ENCODE measurements at regions of chr11 and their contacts with region 1.

Region 1: DNA sequence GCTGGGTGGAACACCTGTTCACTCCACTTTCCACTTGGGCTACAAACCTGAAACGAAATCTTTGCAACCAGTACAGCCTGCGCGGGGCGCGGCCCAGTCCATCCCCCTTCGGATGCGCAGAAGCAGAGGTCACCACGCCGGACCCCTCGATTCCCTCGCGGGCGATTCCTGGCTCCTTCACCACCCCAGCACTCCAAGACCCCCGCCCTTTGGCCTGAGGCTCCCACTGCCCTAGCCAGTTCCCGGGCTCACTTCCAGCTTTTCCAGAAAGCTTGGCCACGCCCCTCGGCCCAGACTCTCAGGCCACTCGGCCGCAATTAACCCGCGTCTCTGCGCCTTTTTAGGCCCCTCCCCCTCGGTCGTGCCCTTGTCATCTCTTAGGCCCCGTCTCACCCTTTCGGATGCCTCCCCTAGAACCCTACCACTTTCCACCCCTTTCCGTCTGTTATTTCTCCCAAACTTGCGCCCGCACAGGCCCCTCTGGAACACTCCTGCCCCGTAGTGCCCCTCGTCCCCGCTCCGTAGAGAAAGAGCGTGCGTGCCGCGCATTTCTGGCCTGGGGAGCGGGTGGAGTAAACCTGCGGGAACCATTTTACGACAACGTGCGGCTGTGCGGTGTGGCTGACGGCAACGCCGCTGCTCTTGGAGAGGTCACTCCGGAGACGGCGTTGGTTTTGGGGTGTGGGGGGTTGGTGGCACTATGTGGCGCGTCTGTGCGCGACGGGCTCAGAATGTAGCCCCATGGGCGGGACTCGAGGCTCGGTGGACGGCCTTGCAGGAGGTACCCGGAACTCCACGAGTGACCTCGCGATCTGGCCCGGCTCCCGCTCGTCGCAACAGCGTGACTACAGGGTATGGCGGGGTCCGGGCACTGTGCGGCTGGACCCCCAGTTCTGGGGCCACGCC is at the start of gene DLAT:
- DNase-seq: peak; percentile 97 to 99
- H3K4me3 ChIP-seq: peak within 1 kb of the TSS; percentile 79
- H3K4me3 Mint-ChIP-seq: peak within 1 kb of the TSS; percentile 94
- H3K27ac Mint-ChIP-seq: peak within 1 kb of the TSS; percentile 98
- H3K4me1 ChIP-seq: no peaks in the 10 kb centered on the region; the same call in 1 of the 2 replicates
- H3K4me1 Mint-ChIP-seq: peaks cover 17% of the 10 kb centered on the region
- H3K27me3 ChIP-seq: no peaks in the 10 kb centered on the region
- H3K27me3 Mint-ChIP-seq: no peaks in the 10 kb centered on the region
- CTCF ChIP-seq: no peak
- total RNA-seq, gene DLAT: 99.3 and 100.0 TPM in 2 replicates

Region 2: DNA sequence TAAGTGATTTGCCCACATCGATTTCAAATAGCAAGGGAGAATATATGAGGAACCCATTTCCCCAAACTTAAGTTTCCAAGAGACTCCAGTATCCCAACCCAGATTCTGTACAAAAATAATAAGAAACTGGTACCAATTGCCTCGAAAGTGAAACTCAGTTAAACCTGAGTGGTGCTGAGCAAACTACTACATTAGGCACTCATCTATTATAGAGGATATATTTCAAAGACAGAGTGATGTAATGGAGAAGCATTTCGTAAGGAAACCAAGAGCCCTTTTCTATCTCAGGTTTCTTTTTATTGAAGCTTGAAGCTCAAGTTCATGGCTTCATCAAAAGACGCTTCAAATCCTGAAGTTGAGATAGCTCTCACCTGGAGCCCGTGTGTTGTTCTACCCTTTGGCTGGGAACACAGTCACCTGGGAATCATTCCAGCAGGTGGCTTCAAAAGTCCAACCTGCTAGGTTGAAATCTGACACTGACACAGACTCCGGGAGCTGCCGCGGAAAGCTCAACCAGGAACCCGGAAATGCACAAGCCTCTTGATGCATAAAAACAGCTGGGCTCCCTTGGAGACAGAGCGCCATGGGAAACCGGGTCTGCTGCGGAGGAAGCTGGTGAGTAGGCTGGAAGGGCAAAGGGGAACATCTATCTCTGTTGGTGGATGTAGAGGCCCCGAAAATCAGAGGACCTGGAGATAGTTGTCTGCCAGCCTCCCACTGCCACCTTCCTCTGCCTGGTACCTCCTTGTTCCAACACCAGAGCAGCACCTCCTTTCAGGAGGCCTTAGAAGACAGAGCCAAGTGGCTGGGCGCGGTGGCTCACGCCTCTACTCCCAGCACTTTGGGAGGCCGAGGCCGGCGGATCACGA is 106.4 kb before region 1 on chr11 and contains the start of gene C11orf52:
- CTCF ChIA-PET with region 1: interaction called, 12 read pairs
- POLR2A ChIA-PET with region 1: no interaction called
- intact Hi-C with region 1: no loop called
- DNase-seq: peak; percentile 92 to 94
- H3K4me3 ChIP-seq: peak within 1 kb of the TSS; percentile 49
- H3K4me3 Mint-ChIP-seq: peak within 1 kb of the TSS; percentile 79
- H3K27ac Mint-ChIP-seq: peak within 1 kb of the TSS; percentile 94
- H3K4me1 ChIP-seq: peaks cover 12% of the 10 kb centered on the region
- H3K4me1 Mint-ChIP-seq: peaks cover 21% of the 10 kb centered on the region
- H3K27me3 ChIP-seq: no peaks in the 10 kb centered on the region
- H3K27me3 Mint-ChIP-seq: no peaks in the 10 kb centered on the region
- CTCF ChIP-seq: peak; percentile 42 to 48
- total RNA-seq, gene C11orf52: 14.4 and 14.8 TPM in 2 replicates

Region 3: DNA sequence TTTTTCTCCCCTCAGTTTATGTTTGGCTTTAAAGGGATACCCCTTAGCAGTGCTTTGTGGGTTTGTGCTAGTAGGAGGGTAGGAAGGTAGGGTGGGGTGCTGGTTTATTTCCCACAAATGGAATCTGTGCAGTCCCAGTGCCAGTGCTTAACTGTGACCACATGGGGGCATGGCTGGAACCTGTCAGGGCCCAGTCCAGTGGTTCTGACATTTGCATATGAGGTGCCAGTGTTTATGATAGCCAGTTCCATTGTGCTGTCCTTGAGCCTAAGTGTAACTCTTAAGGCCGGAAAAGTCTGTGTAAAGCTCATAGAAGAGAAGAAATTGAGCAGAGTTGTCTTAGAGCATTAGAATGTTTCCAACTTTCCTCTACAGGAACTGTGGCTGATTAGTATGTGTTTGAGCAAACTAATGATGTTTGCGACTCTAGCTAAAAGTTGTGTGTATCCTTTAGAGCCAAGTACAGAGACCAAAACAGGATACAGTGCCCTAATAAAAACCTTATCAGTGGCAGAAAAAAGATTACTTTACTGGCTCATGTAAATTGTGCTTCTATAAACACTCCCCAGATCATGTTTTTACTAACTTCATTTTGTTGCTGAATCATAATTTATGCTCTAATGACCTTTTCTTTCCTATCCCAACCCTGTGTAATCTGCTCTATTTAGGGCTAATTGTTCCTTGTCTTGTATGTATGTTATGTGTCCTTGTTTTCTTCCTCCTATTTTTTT is 49.8 kb before region 1 on chr11:
- CTCF ChIA-PET with region 1: no interaction called
- POLR2A ChIA-PET with region 1: no interaction called
- intact Hi-C with region 1: loop called (anchors 1 kb)
- DNase-seq: peak in 1 of 2 experiments; percentile 57
- H3K4me3 ChIP-seq: no peak overlapping the region
- H3K4me3 Mint-ChIP-seq: no peak overlapping the region
- H3K27ac Mint-ChIP-seq: no peak overlapping the region
- H3K4me1 ChIP-seq: no peaks in the 10 kb centered on the region
- H3K4me1 Mint-ChIP-seq: no peaks in the 10 kb centered on the region
- H3K27me3 ChIP-seq: no peaks in the 10 kb centered on the region; the same call in 1 of the 2 replicates
- H3K27me3 Mint-ChIP-seq: no peaks in the 10 kb centered on the region
- CTCF ChIP-seq: peak; percentile 61 to 64

Region 4: DNA sequence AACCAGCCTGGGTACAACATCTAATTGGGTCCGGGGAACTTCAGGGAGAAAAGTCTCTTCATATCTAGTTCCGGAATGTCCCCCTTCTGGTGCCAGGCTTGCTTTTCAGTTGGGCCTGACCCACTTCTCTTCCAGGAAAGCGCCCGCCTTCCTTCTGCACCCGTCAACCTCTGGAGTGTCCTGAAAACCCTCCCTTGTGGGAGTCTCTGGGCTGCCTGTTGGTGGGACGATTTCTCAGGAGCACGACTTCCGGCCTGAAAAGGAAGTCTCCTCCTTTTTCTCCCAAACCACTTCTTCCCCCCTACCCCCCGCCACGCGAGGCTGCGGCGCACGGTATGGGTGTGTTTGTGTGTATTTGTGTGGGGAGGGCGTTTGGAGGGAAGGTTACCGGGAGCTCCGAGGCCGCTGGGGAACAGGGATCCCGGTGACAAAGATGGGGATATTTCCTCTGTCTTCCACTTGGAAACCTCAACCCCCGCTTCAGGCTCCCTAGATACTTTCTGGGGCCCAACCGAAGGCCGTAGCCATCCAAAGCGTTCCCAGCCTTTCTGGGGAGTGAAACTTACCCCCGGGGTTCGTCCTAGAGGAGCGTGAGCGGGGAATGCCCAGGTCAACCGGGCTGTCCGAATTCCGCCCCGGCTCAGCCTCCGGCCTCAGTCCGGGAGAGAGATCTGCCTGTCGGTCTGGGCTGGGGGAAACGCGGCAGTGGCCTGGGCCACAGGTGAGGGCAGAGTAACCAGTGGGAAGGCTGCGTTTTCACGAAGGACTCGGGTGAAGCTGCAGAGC is 49.2 kb after region 1 on chr11 and contains the start of gene NKAPD1:
- CTCF ChIA-PET with region 1: no interaction called
- POLR2A ChIA-PET with region 1: no interaction called
- intact Hi-C with region 1: loop called (anchors 2 kb)
- DNase-seq: peak; percentile 89 to 90
- H3K4me3 ChIP-seq: peak within 1 kb of the TSS; percentile 63
- H3K4me3 Mint-ChIP-seq: peak within 1 kb of the TSS; percentile 86
- H3K27ac Mint-ChIP-seq: peak within 1 kb of the TSS; percentile 98
- H3K4me1 ChIP-seq: no peaks in the 10 kb centered on the region
- H3K4me1 Mint-ChIP-seq: peaks cover 12% of the 10 kb centered on the region
- H3K27me3 ChIP-seq: no peaks in the 10 kb centered on the region
- H3K27me3 Mint-ChIP-seq: no peaks in the 10 kb centered on the region
- CTCF ChIP-seq: peak in 1 of 2 experiments; percentile 13
- total RNA-seq, gene NKAPD1: 36.9 and 37.4 TPM in 2 replicates

Measured in Caco-2 (cell line).